CD4-positive, alpha-beta T cell (primary cell): ENCODE measurements at regions of chr2 and their contacts with region 1.

Region 1: DNA sequence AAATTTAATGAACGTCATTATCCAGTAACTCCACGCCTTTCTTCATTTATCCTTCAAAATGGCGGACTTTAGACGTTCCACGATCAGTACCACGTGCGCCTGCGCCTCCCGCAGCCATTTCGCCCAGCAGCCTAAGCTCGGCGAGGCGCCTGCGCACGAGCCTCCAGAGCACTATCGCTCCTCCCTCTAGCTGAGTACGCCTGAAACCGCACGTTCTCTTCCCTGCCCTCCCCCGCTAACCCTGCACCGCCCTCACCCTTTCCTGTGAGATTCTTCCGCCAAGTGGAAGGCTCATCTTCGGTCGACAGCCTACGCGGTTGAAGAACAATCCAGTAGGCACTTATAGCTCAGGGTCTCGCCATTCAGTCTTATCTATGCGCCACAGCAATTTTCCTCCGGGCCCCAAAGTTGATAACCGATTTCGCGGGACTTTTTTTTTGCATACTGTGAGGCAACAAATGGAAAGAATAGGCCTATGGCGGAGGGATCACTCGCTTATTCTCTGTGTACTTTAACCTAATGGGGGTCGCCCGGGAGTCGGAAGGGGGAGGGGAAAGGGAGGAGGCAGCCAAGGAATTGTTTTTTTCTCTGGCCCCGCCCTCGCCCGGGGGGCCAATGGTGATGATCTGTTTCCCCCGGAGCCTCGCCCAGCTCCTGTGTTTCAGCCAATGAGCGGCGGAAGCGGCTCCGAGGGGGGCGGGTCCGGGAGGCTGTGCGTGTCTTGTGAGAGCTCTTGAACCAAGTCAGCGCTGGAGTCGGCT is at the start of gene KDM3A:
- DNase-seq: peak; percentile 98 to 100 (median 99)
- ATAC-seq: peak; percentile 76
- H3K4me3 ChIP-seq: peak within 1 kb of the TSS; percentile 87
- H3K4me3 Mint-ChIP-seq: peak within 1 kb of the TSS; percentile 99
- H3K27ac ChIP-seq: peak within 1 kb of the TSS; percentile 76 to 94
- H3K27ac Mint-ChIP-seq: peak within 1 kb of the TSS; percentile 97
- H3K4me1 ChIP-seq: peaks cover 33% of the 10 kb centered on the region
- H3K4me1 Mint-ChIP-seq: peaks cover 49% of the 10 kb centered on the region
- H3K27me3 ChIP-seq: no peaks in the 10 kb centered on the region
- H3K27me3 Mint-ChIP-seq: peaks cover 7% of the 10 kb centered on the region
- CTCF ChIP-seq: no peak
- total RNA-seq, gene KDM3A: 205 to 207 TPM

Region 2: GRCh38 chr2:86035883-86036668 is 404.7 kb before region 1 on chr2:
- CTCF ChIA-PET with region 1: no interaction called
- POLR2A ChIA-PET with region 1: interaction called, 13 read pairs
- intact Hi-C with region 1: no loop called
- DNase-seq: peak; percentile 47 to 91 (median 68)
- ATAC-seq: peak; percentile 53
- H3K4me3 ChIP-seq: peak overlapping the region; percentile 29
- H3K4me3 Mint-ChIP-seq: peak overlapping the region; percentile 78
- H3K27ac ChIP-seq: peak overlapping the region; percentile 88 to 92
- H3K27ac Mint-ChIP-seq: peak overlapping the region; percentile 97
- H3K4me1 ChIP-seq: peaks cover 92% of the 10 kb centered on the region
- H3K4me1 Mint-ChIP-seq: peaks cover 72% of the 10 kb centered on the region
- H3K27me3 ChIP-seq: no peaks in the 10 kb centered on the region
- H3K27me3 Mint-ChIP-seq: peaks cover 3% of the 10 kb centered on the region
- CTCF ChIP-seq: peak; percentile 46

Region 3: DNA sequence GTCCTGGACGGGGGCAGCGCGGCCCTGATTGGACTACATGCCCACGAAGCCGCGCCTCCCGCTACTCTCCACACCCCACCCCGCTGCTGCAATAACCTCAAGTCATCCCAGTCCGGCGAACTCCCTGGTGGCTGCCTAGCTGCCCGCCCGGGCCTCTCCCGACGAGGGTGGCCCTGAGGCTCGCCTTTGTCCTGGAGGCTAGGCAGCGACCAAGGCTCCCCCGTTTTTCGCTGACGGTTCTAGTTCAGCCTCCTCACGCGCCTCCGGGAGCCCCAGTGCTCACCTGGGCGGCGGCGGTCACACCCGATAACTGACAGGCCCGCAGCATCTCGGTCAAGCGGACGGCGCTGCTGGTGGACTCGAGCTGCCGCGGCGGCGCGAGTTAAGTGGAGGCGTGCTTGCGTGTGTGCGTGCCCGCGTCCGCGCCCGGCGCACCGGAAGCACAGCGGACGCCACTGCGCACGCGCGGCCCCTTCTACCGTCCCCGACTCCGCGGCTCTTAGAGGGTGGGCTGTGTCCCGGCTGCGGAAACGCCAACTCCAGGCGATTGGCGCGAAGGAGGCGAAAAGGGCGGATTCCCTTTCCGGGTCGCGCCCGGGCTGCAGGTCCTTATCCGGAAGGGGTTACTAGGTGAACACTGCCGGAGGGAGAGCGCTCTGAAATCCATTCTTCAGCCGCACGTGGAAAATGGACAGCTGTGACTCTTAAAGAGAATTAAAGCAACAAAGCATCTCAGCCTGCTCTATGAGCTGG is 245.6 kb before region 1 on chr2 and contains the start of gene IMMT:
- CTCF ChIA-PET with region 1: no interaction called
- POLR2A ChIA-PET with region 1: interaction called, 80 read pairs
- intact Hi-C with region 1: loop called (anchors 2 to 5 kb)
- DNase-seq: peak; percentile 84 to 97 (median 90)
- ATAC-seq: peak; percentile 89
- H3K4me3 ChIP-seq: peak within 1 kb of the TSS; percentile 87
- H3K4me3 Mint-ChIP-seq: peak within 1 kb of the TSS; percentile 89
- H3K27ac ChIP-seq: peak within 1 kb of the TSS; percentile 96 to 98
- H3K27ac Mint-ChIP-seq: peak within 1 kb of the TSS; percentile 85
- H3K4me1 ChIP-seq: peaks cover 45% of the 10 kb centered on the region
- H3K4me1 Mint-ChIP-seq: peaks cover 71% of the 10 kb centered on the region
- H3K27me3 ChIP-seq: no peaks in the 10 kb centered on the region
- H3K27me3 Mint-ChIP-seq: no peaks in the 10 kb centered on the region
- CTCF ChIP-seq: no peak
- total RNA-seq, gene IMMT: 39.5 to 40.8 TPM

Region 4: DNA sequence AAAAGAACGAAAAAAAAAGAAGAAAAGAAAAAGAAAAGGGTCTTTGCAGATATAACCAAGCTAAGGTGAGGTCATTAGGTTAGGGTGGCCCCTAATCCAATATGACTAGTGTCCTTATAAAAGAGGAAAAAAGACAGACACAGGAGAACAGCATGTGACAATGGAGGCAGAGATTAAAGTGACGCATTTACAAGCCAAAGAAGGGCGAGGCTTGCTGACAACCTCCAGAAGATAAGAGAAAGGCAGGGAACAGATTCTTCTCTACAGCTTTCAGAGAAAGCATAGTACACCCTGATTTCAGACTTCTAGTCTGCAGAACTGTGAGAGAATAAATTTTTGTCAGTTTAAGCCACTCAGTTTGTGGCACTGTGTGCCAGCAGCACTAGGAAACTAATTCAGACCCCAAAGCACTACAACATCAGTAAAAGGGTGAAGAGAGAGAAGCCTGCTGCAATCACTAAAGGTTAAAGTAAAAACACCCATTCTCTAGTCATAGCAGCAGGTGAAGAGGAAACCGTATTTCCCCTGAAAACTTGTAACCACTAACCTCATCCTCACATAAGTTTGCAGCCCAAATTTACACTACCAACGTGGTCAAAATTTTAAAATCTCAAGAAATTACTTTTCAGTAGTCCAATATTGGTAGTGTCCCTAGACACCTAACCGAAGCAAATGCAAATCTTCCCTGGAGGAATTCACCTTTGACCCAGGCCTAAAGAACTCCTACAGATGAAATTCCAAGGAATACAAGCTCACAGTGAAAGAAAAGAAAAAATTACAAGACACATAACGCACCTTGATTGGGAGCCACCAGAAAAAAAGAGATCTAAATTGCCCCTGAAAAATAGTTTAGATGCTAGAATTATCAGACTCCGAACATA is 120.9 kb before region 1 on chr2:
- CTCF ChIA-PET with region 1: no interaction called
- POLR2A ChIA-PET with region 1: interaction called, 11 read pairs
- intact Hi-C with region 1: no loop called
- DNase-seq: no peak
- ATAC-seq: peak; percentile 66
- H3K4me3 ChIP-seq: no peak overlapping the region
- H3K4me3 Mint-ChIP-seq: no peak overlapping the region
- H3K27ac ChIP-seq: no peak overlapping the region
- H3K27ac Mint-ChIP-seq: peak overlapping the region; percentile 81
- H3K4me1 ChIP-seq: no peaks in the 10 kb centered on the region
- H3K4me1 Mint-ChIP-seq: peaks cover 10% of the 10 kb centered on the region
- H3K27me3 ChIP-seq: no peaks in the 10 kb centered on the region
- H3K27me3 Mint-ChIP-seq: no peaks in the 10 kb centered on the region
- CTCF ChIP-seq: no peak

Region 5: GRCh38 chr2:86393521-86394491 is 47.0 kb before region 1 on chr2:
- CTCF ChIA-PET with region 1: no interaction called
- POLR2A ChIA-PET with region 1: interaction called, 10 read pairs
- intact Hi-C with region 1: no loop called
- DNase-seq: no peak
- ATAC-seq: no peak
- H3K4me3 ChIP-seq: no peak overlapping the region
- H3K4me3 Mint-ChIP-seq: no peak overlapping the region
- H3K27ac ChIP-seq: no peak overlapping the region
- H3K27ac Mint-ChIP-seq: no peak overlapping the region
- H3K4me1 ChIP-seq: no peaks in the 10 kb centered on the region
- H3K4me1 Mint-ChIP-seq: peaks cover 16% of the 10 kb centered on the region
- H3K27me3 ChIP-seq: no peaks in the 10 kb centered on the region
- H3K27me3 Mint-ChIP-seq: peaks cover 8% of the 10 kb centered on the region
- CTCF ChIP-seq: no peak

Region 6: DNA sequence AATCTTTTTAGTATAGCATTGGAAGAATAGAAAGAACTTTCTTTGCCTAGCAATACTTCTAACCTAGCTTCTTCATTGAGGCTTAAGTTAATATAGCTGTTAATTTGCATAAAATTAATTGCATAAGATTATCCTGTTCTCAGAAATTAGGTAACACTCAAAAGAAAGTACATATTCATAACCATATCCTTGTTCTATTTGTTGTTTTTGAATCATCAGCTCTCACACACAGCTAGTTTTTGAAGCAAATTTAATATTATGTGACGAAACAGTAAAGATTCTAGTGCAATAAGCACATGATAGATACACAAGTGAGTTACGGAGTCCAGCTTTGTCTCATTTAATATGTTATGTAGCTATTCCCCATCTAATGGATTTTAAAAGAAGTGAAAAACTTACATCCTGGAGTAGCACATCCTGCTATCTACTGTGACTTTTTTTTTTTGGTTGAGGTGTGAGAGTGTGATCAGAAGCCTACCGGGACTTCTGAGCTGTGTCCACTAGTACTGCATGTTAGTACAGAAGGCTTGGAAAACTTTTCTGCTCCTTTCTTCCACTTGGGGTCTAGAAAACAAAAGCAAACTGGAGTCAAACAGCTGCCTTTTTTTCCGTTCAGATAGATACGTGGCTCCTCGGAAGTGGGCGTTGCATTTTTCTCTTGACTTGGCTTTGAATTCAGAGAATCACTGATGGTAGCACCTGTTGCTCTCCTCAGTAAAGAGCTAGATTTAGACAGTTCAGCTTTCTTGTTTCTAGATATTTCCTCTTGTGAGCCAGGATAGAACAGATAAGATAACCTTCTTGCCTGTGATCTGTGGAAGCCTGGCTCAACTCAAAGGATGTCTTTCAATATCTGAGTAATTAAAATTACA is 27.6 kb after region 1 on chr2:
- CTCF ChIA-PET with region 1: no interaction called
- POLR2A ChIA-PET with region 1: interaction called, 66 read pairs
- intact Hi-C with region 1: no loop called
- DNase-seq: peak in 6 of 14 experiments; percentile 5 to 54 (median 30)
- ATAC-seq: peak; percentile 76
- H3K4me3 ChIP-seq: peak overlapping the region; percentile 19
- H3K4me3 Mint-ChIP-seq: peak overlapping the region; percentile 80
- H3K27ac ChIP-seq: peak overlapping the region; percentile 21 to 62
- H3K27ac Mint-ChIP-seq: peak overlapping the region; percentile 90
- H3K4me1 ChIP-seq: peaks cover 10% of the 10 kb centered on the region
- H3K4me1 Mint-ChIP-seq: peaks cover 76% of the 10 kb centered on the region
- H3K27me3 ChIP-seq: no peaks in the 10 kb centered on the region
- H3K27me3 Mint-ChIP-seq: no peaks in the 10 kb centered on the region
- CTCF ChIP-seq: no peak

Region 7: GRCh38 chr2:86584151-86584913 is 143.5 kb after region 1 on chr2:
- CTCF ChIA-PET with region 1: no interaction called
- POLR2A ChIA-PET with region 1: interaction called, 13 read pairs
- intact Hi-C with region 1: no loop called
- DNase-seq: peak in 4 of 14 experiments; percentile 43 to 61 (median 48)
- ATAC-seq: peak; percentile 91
- H3K4me3 ChIP-seq: no peak overlapping the region
- H3K4me3 Mint-ChIP-seq: peak overlapping the region; percentile 32
- H3K27ac ChIP-seq: peak overlapping the region; percentile 1 to 61
- H3K27ac Mint-ChIP-seq: peak overlapping the region; percentile 85
- H3K4me1 ChIP-seq: peaks cover 8% of the 10 kb centered on the region
- H3K4me1 Mint-ChIP-seq: peaks cover 28% of the 10 kb centered on the region
- H3K27me3 ChIP-seq: no peaks in the 10 kb centered on the region
- H3K27me3 Mint-ChIP-seq: no peaks in the 10 kb centered on the region
- CTCF ChIP-seq: no peak